MCF 10A (cell line): ENCODE measurements at regions of chr20 and their contacts with region 1.

Region 1: GRCh38 chr20:20593447-20594170 is 118.8 kb downstream of the RALGAPA2 start:
- DNase-seq: peak; percentile 46
- H3K4me3 Mint-ChIP-seq: no peak overlapping the region
- H3K27ac Mint-ChIP-seq: peak overlapping the region; percentile 27
- H3K4me1 Mint-ChIP-seq: peaks cover 10% of the 10 kb centered on the region
- H3K27me3 Mint-ChIP-seq: no peaks in the 10 kb centered on the region
- CTCF ChIP-seq: peak; percentile 49

Region 2: DNA sequence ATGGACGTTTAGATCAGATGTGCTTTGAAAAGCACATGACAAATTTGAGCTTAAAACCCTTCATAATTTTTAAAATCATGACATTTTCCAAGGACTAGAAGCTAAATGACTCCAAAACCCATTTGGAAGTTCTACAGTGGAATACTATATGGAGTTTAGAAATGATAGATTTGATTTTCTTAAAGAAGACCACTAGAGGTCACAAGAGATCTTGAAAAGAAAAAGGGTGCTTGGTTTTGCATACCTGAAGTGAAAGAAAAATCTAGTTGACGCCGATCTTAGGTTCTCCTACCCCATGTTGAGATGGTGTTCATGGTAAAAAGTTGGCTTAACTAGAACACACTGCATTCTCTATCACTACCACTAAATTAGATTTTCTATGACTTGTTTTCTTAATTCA is 509.8 kb before region 1 on chr20:
- CTCF ChIA-PET with region 1: interaction called, 61 read pairs
- POLR2A ChIA-PET with region 1: interaction called, 5 read pairs
- intact Hi-C with region 1: loop called (anchors 1 kb)
- DNase-seq: peak; percentile 56
- H3K4me3 Mint-ChIP-seq: peak overlapping the region; percentile 20
- H3K27ac Mint-ChIP-seq: peak overlapping the region; percentile 95
- H3K4me1 Mint-ChIP-seq: peaks cover 44% of the 10 kb centered on the region
- H3K27me3 Mint-ChIP-seq: no peaks in the 10 kb centered on the region
- CTCF ChIP-seq: peak; percentile 55

Region 3: DNA sequence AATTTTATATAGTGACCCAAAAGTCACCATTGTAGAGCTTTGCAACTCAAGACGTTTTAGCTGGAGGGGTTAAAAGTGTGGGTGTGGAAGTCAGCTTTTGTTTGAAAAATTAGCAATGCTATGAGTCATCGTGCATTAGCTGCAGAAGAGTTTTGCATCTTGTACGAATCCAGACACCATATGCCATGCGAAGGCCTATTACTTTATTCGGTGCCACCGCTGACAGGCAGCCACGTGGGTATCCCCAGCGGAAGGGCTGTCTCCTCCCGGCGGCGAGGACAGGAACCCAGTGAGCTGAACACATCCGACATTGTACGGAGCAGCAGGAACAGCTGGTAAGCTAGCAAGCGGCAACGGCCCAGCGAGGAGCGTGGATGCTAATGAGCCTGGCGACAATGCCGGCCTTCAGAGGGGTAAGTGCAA is 141.3 kb before region 1 on chr20:
- CTCF ChIA-PET with region 1: interaction called, 14 read pairs
- POLR2A ChIA-PET with region 1: interaction called, 3 read pairs
- intact Hi-C with region 1: no loop called
- DNase-seq: peak; percentile 68
- H3K4me3 Mint-ChIP-seq: no peak overlapping the region
- H3K27ac Mint-ChIP-seq: no peak overlapping the region
- H3K4me1 Mint-ChIP-seq: peaks cover 8% of the 10 kb centered on the region
- H3K27me3 Mint-ChIP-seq: no peaks in the 10 kb centered on the region
- CTCF ChIP-seq: no peak

Region 4: GRCh38 chr20:20568604-20569205 is 24.9 kb before region 1 on chr20:
- CTCF ChIA-PET with region 1: interaction called, 16 read pairs
- POLR2A ChIA-PET with region 1: no interaction called
- intact Hi-C with region 1: no loop called
- DNase-seq: peak; percentile 49
- H3K4me3 Mint-ChIP-seq: no peak overlapping the region
- H3K27ac Mint-ChIP-seq: no peak overlapping the region
- H3K4me1 Mint-ChIP-seq: no peaks in the 10 kb centered on the region
- H3K27me3 Mint-ChIP-seq: no peaks in the 10 kb centered on the region
- CTCF ChIP-seq: peak; percentile 81

Region 5: GRCh38 chr20:20582734-20583133 is 10.9 kb before region 1 on chr20:
- CTCF ChIA-PET with region 1: interaction called, 127 read pairs
- POLR2A ChIA-PET with region 1: interaction called, 4 read pairs
- intact Hi-C with region 1: no loop called
- DNase-seq: no peak
- H3K4me3 Mint-ChIP-seq: no peak overlapping the region
- H3K27ac Mint-ChIP-seq: no peak overlapping the region
- H3K4me1 Mint-ChIP-seq: no peaks in the 10 kb centered on the region
- H3K27me3 Mint-ChIP-seq: no peaks in the 10 kb centered on the region
- CTCF ChIP-seq: no peak

Region 6: GRCh38 chr20:20629556-20630188 is 36.1 kb after region 1 on chr20:
- CTCF ChIA-PET with region 1: no interaction called
- POLR2A ChIA-PET with region 1: no interaction called
- intact Hi-C with region 1: no loop called
- DNase-seq: no peak
- H3K4me3 Mint-ChIP-seq: no peak overlapping the region
- H3K27ac Mint-ChIP-seq: no peak overlapping the region
- H3K4me1 Mint-ChIP-seq: no peaks in the 10 kb centered on the region
- H3K27me3 Mint-ChIP-seq: no peaks in the 10 kb centered on the region
- CTCF ChIP-seq: no peak

Region 7: GRCh38 chr20:20658871-20659431 is 65.3 kb after region 1 on chr20:
- CTCF ChIA-PET with region 1: interaction called, 14 read pairs
- POLR2A ChIA-PET with region 1: no interaction called
- intact Hi-C with region 1: no loop called
- DNase-seq: no peak
- H3K4me3 Mint-ChIP-seq: no peak overlapping the region
- H3K27ac Mint-ChIP-seq: no peak overlapping the region
- H3K4me1 Mint-ChIP-seq: peaks cover 4% of the 10 kb centered on the region
- H3K27me3 Mint-ChIP-seq: no peaks in the 10 kb centered on the region
- CTCF ChIP-seq: no peak